ENCODE measurements at regions of chr12 and their contacts with region 1.

Region 1: GRCh38 chr12:50504798-50505385 is at the start of gene DIP2B:
- DNase-seq: peak; percentile 99
- H3K4me3 ChIP-seq: peak within 1 kb of the TSS; percentile 82 to 94 (median 88)
- H3K27ac ChIP-seq: peak within 1 kb of the TSS; percentile 91 to 99 (median 97)
- H3K4me1 ChIP-seq: peaks cover 39 to 52% (median 46%) of the 10 kb centered on the region in 6 donors
- H3K27me3 ChIP-seq: no peaks in the 10 kb centered on the region
- CTCF ChIP-seq: peak; percentile 83 to 99 (median 96)
- POLR2A ChIP-seq: no peak
- total RNA-seq, gene DIP2B: 46.2 to 96.4 (median 77.7) TPM

Region 2: GRCh38 chr12:50637870-50638481 is 133.1 kb after region 1 on chr12:
- intact Hi-C with region 1: loop called (anchors 2 kb)
- DNase-seq: no peak
- H3K4me3 ChIP-seq: no peak overlapping the region
- H3K27ac ChIP-seq: peak overlapping the region in 7 of 8 donors; percentile 0 to 56 (median 28)
- H3K4me1 ChIP-seq: peaks cover 18 to 75% (median 44%) of the 10 kb centered on the region in 6 donors
- H3K27me3 ChIP-seq: no peaks in the 10 kb centered on the region
- CTCF ChIP-seq: peak; percentile 27 to 81 (median 67)
- POLR2A ChIP-seq: no peak